Tibial artery (tissue), 4 donors: ENCODE measurements at regions of chr20 and their contacts with region 1.

Region 1: GRCh38 chr20:10673988-10674711 is at the start of gene JAG1:
- DNase-seq: peak; percentile 98
- H3K4me3 ChIP-seq: peak within 1 kb of the TSS; percentile 88 to 90
- H3K27ac ChIP-seq: peak within 1 kb of the TSS; percentile 99
- H3K4me1 ChIP-seq: peaks cover 0 to 17% (median 10%) of the 10 kb centered on the region in 4 donors
- H3K27me3 ChIP-seq: no peaks in the 10 kb centered on the region
- CTCF ChIP-seq: no peak

Region 2: GRCh38 chr20:10434467-10434831 is 239.7 kb before region 1 on chr20:
- intact Hi-C with region 1: loop called (anchors 10 kb)
- DNase-seq: peak; percentile 93 to 98
- H3K4me3 ChIP-seq: peak overlapping the region; percentile 69 to 85
- H3K27ac ChIP-seq: peak overlapping the region; percentile 82 to 87
- H3K4me1 ChIP-seq: peaks cover 0 to 27% (median 13%) of the 10 kb centered on the region in 4 donors
- H3K27me3 ChIP-seq: no peaks in the 10 kb centered on the region
- CTCF ChIP-seq: no peak

Region 3: GRCh38 chr20:10466325-10466724 is 207.8 kb before region 1 on chr20:
- intact Hi-C with region 1: no loop called
- DNase-seq: no peak
- H3K4me3 ChIP-seq: peak overlapping the region; percentile 6 to 30
- H3K27ac ChIP-seq: peak overlapping the region; percentile 66 to 68
- H3K4me1 ChIP-seq: peaks cover 0 to 49% (median 23%) of the 10 kb centered on the region in 4 donors
- H3K27me3 ChIP-seq: no peaks in the 10 kb centered on the region
- CTCF ChIP-seq: no peak

Region 4: GRCh38 chr20:10864076-10864918 is 190.1 kb after region 1 on chr20:
- intact Hi-C with region 1: loop called (anchors 10 kb)
- DNase-seq: no peak
- H3K4me3 ChIP-seq: peak overlapping the region in 1 of 2 donors; percentile 2
- H3K27ac ChIP-seq: peak overlapping the region; percentile 46 to 52
- H3K4me1 ChIP-seq: peaks cover 0 to 39% (median 21%) of the 10 kb centered on the region in 4 donors
- H3K27me3 ChIP-seq: no peaks in the 10 kb centered on the region
- CTCF ChIP-seq: no peak

Region 5: DNA sequence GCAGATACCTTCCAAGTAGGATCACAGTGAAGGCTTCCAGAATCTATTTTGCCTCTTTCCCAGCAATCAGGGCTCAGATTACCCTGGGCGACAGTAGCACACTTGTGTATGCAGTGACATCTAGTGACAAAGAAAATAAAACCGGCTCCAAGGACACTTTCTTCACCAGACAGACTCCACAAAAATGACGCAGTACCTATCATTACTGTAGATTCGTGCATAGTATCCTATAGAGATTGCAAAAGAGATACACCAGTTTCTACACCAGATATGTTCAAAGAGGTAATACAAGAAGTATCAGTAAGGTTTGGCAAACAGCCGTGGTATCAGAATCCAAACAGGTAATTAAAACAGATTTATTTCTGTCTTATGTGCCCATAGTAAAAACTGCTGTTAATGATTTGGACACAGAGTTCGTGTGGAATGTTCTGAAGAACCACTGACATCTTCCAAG is 600.0 kb after region 1 on chr20:
- intact Hi-C with region 1: loop called (anchors 2 kb)
- DNase-seq: peak in 1 of 2 donors; percentile 32
- H3K4me3 ChIP-seq: no peak overlapping the region
- H3K27ac ChIP-seq: no peak overlapping the region
- H3K4me1 ChIP-seq: peaks cover 0 to 10% (median 0%) of the 10 kb centered on the region in 4 donors
- H3K27me3 ChIP-seq: peaks cover 0 to 2% of the 10 kb centered on the region in 2 donors
- CTCF ChIP-seq: peak; percentile 58 to 66